RWPE1 (cell line): ENCODE measurements at regions of chr6 and their contacts with region 1.

Region 1: DNA sequence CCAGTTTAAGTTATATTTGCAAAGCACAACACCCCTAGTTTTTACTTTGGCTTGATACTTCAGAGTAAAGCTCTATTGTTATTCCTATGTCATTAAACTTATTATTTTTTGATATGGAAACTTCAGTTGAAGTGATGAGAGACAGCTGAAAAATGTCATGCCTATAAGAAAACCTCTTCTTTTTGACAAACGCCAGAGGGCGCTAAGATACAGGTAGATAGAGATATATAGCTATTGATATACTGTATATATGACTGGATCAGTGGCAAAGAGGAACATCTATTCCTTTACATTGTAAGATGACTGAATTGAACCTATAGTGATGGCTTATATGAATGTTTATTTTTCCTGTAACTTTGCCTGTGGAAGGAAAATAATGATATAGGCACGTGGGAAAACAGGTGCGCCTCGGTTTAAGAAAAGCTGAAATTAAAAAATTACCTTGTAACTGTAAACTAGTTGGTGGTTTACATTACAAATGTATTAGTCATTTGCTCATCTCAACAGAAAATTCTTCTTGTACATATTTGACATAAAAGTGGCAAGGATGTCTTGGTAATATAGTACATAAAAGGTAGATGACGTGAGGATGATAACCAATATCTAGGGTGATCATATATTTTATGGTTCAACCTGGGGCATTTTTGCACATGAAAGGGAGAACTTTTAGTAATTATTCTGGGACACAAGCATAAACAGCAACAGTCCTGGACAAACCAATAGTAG is 74.1 kb downstream of the LAMA4 start:
- DNase-seq: peak; percentile 66
- H3K27ac ChIP-seq: no peak overlapping the region
- CTCF ChIP-seq: peak; percentile 75

Region 2: GRCh38 chr6:112163295-112164257 is 16.7 kb before region 1 on chr6:
- CTCF ChIA-PET with region 1: interaction called, 10 read pairs
- POLR2A ChIA-PET with region 1: no interaction called
- DNase-seq: peak; percentile 75
- H3K27ac ChIP-seq: no peak overlapping the region
- CTCF ChIP-seq: peak; percentile 95

Region 3: GRCh38 chr6:112237595-112237994 is 57.3 kb after region 1 on chr6:
- CTCF ChIA-PET with region 1: interaction called, 11 read pairs
- POLR2A ChIA-PET with region 1: no interaction called
- DNase-seq: no peak
- H3K27ac ChIP-seq: peak overlapping the region; percentile 78; the same call in 1 of the 2 replicates
- CTCF ChIP-seq: no peak

Region 4: GRCh38 chr6:112269114-112269513 is 88.9 kb after region 1 on chr6:
- CTCF ChIA-PET with region 1: interaction called, 11 read pairs
- POLR2A ChIA-PET with region 1: no interaction called
- DNase-seq: no peak
- H3K27ac ChIP-seq: no peak overlapping the region
- CTCF ChIP-seq: no peak

Region 5: DNA sequence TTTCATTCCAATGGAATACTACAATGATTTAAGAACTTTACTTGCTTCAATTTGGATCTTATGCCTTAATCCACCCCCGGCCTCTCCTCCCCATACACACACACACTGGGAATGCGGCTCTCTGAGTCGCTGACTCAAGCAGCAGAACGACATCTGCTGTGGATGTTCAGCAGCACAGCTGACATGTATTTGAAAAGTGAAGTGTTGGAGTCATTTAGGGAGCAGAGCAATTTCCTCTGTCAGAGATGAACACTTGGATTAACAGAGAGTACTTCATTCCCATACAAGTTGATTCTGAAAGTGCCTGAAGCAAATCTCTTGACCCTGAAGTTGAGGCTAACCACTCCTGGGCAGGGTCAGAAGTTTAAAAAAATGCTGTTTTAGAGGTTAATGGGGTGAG is 102.0 kb after region 1 on chr6:
- CTCF ChIA-PET with region 1: interaction called, 17 read pairs
- POLR2A ChIA-PET with region 1: no interaction called
- DNase-seq: peak; percentile 62
- H3K27ac ChIP-seq: no peak overlapping the region
- CTCF ChIP-seq: no peak

Region 6: GRCh38 chr6:112310439-112311125 is 130.3 kb after region 1 on chr6:
- CTCF ChIA-PET with region 1: interaction called, 19 read pairs
- POLR2A ChIA-PET with region 1: no interaction called
- DNase-seq: no peak
- H3K27ac ChIP-seq: no peak overlapping the region
- CTCF ChIP-seq: no peak